Prostate gland (tissue), 2 donors: ENCODE measurements at regions of chr21 and their contacts with region 1.

Region 1: GRCh38 chr21:33924079-33924765 is 8.6 kb upstream of the ATP5PO start:
- DNase-seq: peak; percentile 85
- H3K4me3 ChIP-seq: no peak overlapping the region
- H3K27ac ChIP-seq: no peak overlapping the region
- H3K4me1 ChIP-seq: no peaks in the 10 kb centered on the region
- H3K27me3 ChIP-seq: no peaks in the 10 kb centered on the region
- CTCF ChIP-seq: peak; percentile 80 to 93 (median 92)
- POLR2A ChIP-seq: no peak

Region 2: DNA sequence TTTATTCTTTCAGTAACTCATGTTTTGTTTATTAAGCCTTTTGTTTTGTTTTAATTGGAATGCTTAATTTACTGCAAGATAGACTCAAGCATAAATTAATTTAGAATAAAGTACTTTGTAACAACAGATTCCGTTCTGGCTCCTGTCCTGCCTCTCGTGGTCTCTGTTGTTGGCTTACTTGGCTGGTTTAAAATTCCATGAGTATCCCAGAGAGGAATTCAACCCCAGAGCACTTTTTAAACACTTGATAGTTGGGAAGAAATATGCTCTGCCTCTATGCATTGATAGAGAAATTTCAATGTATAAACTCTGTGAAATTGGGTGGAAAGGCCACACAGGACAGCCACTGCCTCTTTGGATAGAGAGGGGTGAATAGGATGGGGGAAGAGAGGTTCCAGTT is 98.3 kb before region 1 on chr21:
- intact Hi-C with region 1: no loop called
- DNase-seq: no peak
- H3K4me3 ChIP-seq: no peak overlapping the region
- H3K27ac ChIP-seq: peak overlapping the region in 1 of 2 donors; percentile 5
- H3K4me1 ChIP-seq: no peaks in the 10 kb centered on the region
- H3K27me3 ChIP-seq: no peaks in the 10 kb centered on the region
- CTCF ChIP-seq: no peak
- POLR2A ChIP-seq: no peak

Region 3: GRCh38 chr21:34351786-34352241 is 427.6 kb after region 1 on chr21:
- intact Hi-C with region 1: loop called (anchors 2 kb)
- DNase-seq: peak; percentile 26
- H3K4me3 ChIP-seq: no peak overlapping the region
- H3K27ac ChIP-seq: no peak overlapping the region
- H3K4me1 ChIP-seq: no peaks in the 10 kb centered on the region
- H3K27me3 ChIP-seq: no peaks in the 10 kb centered on the region
- CTCF ChIP-seq: peak in 3 of 4 experiments; percentile 45 to 76 (median 75)
- POLR2A ChIP-seq: no peak